Vagina (tissue), 2 donors: ENCODE measurements at regions of chr14 and their contacts with region 1.

Region 1: GRCh38 chr14:91323671-91324605 is 79.4 kb upstream of the GPR68 start:
- DNase-seq: no peak
- H3K4me3 ChIP-seq: peak overlapping the region; percentile 31 to 34
- H3K27ac ChIP-seq: peak overlapping the region; percentile 55
- H3K4me1 ChIP-seq: peaks cover 18% of the 10 kb centered on the region
- H3K27me3 ChIP-seq: no peaks in the 10 kb centered on the region
- CTCF ChIP-seq: peak; percentile 82 to 95 (median 91)
- POLR2A ChIP-seq: no peak

Region 2: DNA sequence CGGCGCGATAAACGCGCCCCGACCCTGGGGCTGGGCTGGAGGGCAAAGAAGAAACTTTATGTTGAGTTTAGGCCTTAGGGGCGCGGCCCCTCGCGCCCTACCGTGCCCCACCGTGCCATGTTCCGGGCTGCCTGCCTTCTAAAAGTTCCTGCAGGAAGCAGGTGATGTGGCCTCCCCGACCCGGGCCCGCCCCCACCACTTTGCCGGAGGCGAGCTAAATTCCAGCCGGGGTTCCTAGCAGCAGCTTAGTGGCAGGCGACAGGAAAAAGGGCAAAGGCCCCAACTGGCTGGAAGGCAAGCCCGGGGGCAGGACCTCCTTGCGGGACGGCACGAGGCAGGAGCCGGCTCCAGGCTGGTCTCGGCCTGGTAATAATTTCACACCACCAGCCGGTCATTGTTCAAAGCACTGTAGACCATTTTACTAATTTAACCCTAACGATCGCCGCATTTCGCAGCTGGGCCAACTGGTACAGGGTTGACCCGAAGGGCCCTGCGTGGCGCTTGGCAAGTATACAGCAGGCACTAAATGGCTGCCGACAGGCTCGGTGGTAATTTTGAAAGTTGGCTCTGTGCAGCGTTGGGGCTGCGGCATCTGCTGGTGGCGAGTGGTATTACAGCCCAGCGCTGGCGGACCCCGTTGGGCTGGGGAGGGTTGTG is 94.6 kb after region 1 on chr14:
- intact Hi-C with region 1: loop called (anchors 5 kb)
- DNase-seq: no peak
- H3K4me3 ChIP-seq: peak overlapping the region; percentile 53 to 63
- H3K27ac ChIP-seq: peak overlapping the region; percentile 5
- H3K4me1 ChIP-seq: peaks cover 24% of the 10 kb centered on the region
- H3K27me3 ChIP-seq: no peaks in the 10 kb centered on the region
- CTCF ChIP-seq: peak; percentile 94 to 98 (median 98)
- POLR2A ChIP-seq: no peak